Heart right ventricle (tissue), 16 donors: ENCODE measurements at regions of chr21 and their contacts with region 1.

Region 1: DNA sequence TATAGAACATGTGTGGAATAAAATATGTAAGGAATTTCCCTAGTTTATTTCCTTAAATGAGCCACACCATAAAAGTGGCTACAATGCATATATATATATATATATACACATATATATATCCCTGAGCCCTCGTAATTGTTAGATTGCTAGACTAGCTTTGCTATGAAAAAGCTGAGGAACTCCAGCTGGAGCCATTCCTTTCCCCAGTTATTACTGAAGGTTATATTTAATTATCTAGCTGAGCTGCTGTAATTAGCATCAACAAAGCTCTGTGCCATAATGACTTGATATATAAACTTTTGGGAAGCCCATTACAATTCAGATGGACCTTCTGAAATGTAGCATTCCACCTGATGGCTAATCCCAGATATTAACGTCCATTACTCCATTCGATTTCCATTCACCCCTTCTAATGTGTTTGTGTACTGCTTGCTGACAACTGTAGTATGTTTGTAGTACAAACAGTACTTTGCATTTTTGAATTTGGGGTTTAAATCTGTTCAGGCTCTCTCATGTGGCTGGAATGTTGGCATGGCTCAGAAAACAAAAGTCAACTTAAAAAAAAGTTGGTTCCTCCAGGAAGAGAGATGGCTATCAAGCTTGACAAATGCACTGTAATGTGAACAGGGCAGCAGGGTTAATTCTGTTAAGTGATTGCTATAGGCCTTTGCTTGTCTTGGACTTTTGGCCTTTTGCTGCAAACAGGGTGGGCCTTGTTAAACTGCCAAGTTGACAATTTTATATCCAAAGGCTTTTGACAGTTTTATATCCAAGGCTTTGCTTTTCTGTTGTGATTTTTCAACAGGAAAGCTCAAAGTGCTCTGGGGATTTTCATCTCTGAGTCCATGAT is 170.0 kb downstream of the LTN1 start:
- DNase-seq: peak in 1 of 2 donors; percentile 8
- ATAC-seq: peak in 7 of 8 donors; percentile 41 to 92 (median 59)
- H3K4me3 ChIP-seq: no peak overlapping the region
- H3K27ac ChIP-seq: peak overlapping the region in 7 of 10 donors; percentile 1 to 62 (median 51)
- H3K4me1 ChIP-seq: peaks cover 3 to 30% (median 27%) of the 10 kb centered on the region in 9 donors
- H3K27me3 ChIP-seq: no peaks in the 10 kb centered on the region
- CTCF ChIP-seq: no peak

Region 2: GRCh38 chr21:28754127-28754611 is 68.5 kb before region 1 on chr21:
- intact Hi-C with region 1: loop called in 1 of 10 experiments (anchors 2 kb)
- DNase-seq: peak; percentile 25 to 87
- ATAC-seq: peak; percentile 94 to 99 (median 98)
- H3K4me3 ChIP-seq: peak overlapping the region in 2 of 10 donors; percentile 11 to 26
- H3K27ac ChIP-seq: peak overlapping the region; percentile 81 to 97 (median 92)
- H3K4me1 ChIP-seq: peaks cover 8 to 68% (median 34%) of the 10 kb centered on the region in 9 donors
- H3K27me3 ChIP-seq: no peaks in the 10 kb centered on the region
- CTCF ChIP-seq: no peak

Region 3: GRCh38 chr21:28871388-28872010 is 48.8 kb after region 1 on chr21:
- intact Hi-C with region 1: loop called in 1 of 10 experiments (anchors 10 kb)
- DNase-seq: no peak
- ATAC-seq: no peak
- H3K4me3 ChIP-seq: no peak overlapping the region
- H3K27ac ChIP-seq: no peak overlapping the region
- H3K4me1 ChIP-seq: no peaks in the 10 kb centered on the region
- H3K27me3 ChIP-seq: no peaks in the 10 kb centered on the region
- CTCF ChIP-seq: no peak